HEK293T (cell line): ENCODE measurements at regions of chrX and their contacts with region 1.

Region 1: DNA sequence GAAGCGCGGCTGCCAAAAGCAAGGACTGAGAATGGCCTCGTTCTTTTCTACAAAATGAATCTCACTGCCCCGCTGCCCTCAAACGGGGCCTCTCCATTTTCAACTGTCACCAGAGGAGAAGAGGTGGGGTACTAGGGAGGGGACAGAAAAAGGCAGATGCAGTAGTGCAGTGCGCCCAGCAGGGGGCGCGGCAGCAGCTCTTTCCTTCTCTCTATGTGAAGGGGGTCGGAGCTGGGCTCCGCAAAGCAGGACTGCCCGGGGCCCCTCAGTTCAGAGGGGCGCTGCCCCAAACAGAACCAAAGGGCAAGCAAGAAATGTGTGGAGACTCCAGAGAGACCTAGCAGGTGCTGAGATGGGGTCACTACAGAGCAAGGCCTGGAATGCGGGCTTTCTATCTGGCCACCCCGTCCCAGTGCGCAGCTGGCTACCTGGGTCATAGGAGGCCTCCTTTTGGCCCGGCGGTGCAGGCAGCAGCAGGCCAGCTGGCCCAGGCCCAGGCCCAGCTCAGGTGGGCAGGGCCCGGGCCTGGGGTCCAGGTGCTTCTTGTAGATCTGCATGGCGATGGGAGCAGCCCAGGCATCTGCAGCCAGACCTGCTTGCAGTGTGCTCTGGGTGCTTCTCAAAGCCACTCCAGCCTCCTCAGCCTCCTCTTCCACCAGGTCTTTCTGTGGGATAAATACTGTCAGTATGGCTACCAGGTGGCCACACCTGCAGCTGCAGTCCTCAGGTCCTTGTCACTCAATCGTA is 5.9 kb downstream of the IRAK1 start:
- DNase-seq: peak; percentile 78

Region 2: DNA sequence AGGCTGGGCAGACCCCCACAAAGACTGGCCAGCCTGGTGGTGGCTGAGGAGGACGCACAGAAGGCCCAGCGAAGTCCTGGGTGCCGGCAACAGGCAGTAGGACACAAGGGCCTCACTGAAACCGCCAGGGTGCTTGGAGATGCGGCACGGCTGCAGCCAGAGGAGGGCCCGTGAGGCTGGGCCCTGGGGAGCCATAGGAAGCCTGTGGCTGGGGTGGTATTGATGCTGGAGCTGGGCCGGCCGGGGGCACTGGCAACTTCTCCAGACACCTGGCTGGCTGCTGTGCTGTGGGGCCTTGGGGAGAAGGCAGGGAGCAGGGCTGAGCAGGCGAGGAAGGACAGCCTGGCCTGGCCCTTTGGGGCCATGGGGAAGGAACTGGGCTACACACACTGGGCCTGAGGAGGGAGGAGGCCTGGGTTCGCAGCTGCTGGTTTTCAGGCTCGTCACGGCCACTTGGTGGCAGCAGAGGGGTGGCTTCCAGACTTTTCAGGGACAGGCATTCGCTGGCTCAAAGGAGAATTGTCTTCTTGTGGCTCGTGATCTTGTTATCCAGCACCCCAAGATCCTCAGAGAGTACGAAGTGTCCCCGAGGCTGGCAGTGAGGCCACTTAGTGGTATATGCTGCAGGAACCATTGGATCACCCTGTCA is 459.1 kb before region 1 on chrX:
- CTCF ChIA-PET with region 1: no interaction called
- POLR2A ChIA-PET with region 1: no interaction called
- DNase-seq: peak; percentile 81

Region 3: GRCh38 chrX:153888344-153888743 is 125.4 kb before region 1 on chrX:
- CTCF ChIA-PET with region 1: no interaction called
- POLR2A ChIA-PET with region 1: no interaction called
- DNase-seq: no peak

Region 4: DNA sequence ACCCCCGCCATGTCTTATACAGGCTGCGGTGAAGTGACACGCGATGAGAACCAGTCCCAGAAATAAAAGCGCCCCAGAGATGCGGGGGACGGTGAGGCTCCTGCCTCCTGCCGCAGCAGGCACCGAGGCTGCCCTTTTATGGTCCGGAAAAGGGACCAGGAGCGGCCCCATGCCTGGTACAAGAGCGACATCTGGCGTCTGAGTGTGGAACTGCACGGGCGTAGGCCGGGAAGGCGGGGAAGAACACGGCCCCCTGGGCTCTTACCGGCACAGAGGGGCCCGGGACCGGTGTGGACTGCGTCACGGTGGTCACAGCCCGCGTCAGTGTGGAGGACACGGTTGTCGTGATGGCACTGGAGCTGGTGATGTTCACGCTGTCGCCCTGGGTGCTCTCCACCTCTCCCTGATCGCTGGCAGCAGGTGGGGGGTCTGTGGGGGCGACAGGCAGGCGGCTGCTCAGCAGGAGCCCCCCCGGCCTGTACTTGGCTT is 60.4 kb before region 1 on chrX:
- CTCF ChIA-PET with region 1: no interaction called
- POLR2A ChIA-PET with region 1: no interaction called
- DNase-seq: peak; percentile 88

Region 5: GRCh38 chrX:154002215-154002719 is 11.5 kb before region 1 on chrX:
- CTCF ChIA-PET with region 1: interaction called, 11 read pairs
- POLR2A ChIA-PET with region 1: interaction called, 3 read pairs
- DNase-seq: no peak

Region 6: DNA sequence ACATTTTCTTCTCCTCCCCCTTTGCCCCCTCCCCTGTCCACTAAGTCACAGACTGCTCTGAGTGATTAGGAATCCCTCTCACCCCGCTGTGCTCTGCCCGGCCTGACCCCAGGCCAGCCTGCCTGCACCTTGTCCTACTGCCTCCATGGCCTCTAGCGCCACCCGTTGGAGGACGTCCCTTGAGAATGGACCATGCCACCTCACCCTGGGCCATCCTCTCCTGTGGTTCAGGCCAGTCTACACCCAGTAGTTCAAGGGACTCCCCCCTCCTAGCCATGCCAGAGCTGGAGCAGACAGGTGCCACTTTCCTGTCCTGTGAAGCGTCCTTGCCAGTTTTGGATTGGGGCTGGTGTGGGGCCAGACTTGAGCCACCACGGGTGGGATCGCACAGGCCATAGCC is 15.7 kb after region 1 on chrX:
- CTCF ChIA-PET with region 1: interaction called, 13 read pairs
- POLR2A ChIA-PET with region 1: interaction called, 3 read pairs
- DNase-seq: no peak

Region 7: GRCh38 chrX:154049209-154050097 is 35.7 kb after region 1 on chrX:
- CTCF ChIA-PET with region 1: interaction called, 10 read pairs
- POLR2A ChIA-PET with region 1: no interaction called
- DNase-seq: no peak

Region 8: GRCh38 chrX:154059729-154060245 is 46.0 kb after region 1 on chrX:
- CTCF ChIA-PET with region 1: no interaction called
- POLR2A ChIA-PET with region 1: no interaction called
- DNase-seq: no peak